ENCODE measurements at regions of chr1 and their contacts with region 1.

Region 1: DNA sequence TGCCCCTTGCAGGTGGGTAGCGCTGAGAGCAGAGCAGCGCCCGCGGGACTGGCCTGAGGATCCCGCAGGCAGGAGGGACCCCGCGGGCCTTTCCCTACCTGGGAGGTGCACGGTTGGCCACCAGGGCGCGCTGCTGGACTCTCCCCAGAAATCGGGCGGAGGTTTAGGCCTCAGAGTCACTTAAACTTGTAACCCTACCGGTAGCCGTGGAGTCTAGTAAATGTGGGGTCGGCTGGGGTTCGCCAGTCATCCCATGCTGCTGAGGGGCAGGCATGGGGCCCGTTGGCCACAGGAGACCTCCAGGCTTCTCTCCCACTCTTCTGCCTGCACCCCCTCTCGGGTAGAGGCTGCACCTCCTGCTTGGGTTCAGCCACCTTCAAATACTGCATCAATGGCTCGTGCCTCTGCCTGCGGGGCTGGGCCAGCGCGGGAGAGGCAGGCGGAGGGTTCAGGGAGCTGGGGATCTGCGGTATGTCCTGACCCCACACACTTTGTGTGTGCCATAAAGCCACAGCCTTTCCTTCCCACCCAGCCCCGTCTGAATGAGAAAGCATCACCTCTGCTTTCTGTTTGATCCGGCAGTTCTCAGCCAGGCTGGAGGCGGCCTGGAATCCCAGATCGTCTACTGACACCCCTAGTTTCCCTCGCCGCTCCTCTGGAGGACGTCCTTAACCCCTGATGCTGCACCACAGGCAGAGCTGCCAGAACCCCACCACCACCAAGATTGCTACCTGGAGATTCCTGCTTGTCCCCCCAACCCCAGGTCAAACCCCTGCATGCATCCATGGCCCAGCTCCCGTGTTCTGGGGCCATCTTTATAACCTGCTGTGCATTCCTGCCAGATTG is 12.3 kb upstream of the GSTM4 start:
- DNase-seq: peak; percentile 79 to 91 (median 88)
- ATAC-seq: peak; percentile 94
- H3K4me3 ChIP-seq: no peak overlapping the region
- H3K4me3 Mint-ChIP-seq: no peak overlapping the region
- H3K27ac ChIP-seq: no peak overlapping the region
- H3K27ac Mint-ChIP-seq: no peak overlapping the region
- H3K4me1 ChIP-seq: peaks cover 15% of the 10 kb centered on the region
- H3K4me1 Mint-ChIP-seq: peaks cover 20% of the 10 kb centered on the region
- H3K27me3 ChIP-seq: no peaks in the 10 kb centered on the region
- H3K27me3 Mint-ChIP-seq: no peaks in the 10 kb centered on the region
- CTCF ChIP-seq: peak; percentile 85

Region 2: GRCh38 chr1:109620841-109621286 is 22.7 kb before region 1 on chr1:
- CTCF ChIA-PET with region 1: interaction called, 10 read pairs
- POLR2A ChIA-PET with region 1: interaction called, 4 read pairs
- intact Hi-C with region 1: no loop called
- DNase-seq: peak; percentile 91 to 99 (median 97)
- ATAC-seq: peak; percentile 86
- H3K4me3 ChIP-seq: peak overlapping the region; percentile 91
- H3K4me3 Mint-ChIP-seq: peak overlapping the region; percentile 99
- H3K27ac ChIP-seq: peak overlapping the region; percentile 85 to 95
- H3K27ac Mint-ChIP-seq: peak overlapping the region; percentile 89
- H3K4me1 ChIP-seq: peaks cover 80% of the 10 kb centered on the region
- H3K4me1 Mint-ChIP-seq: peaks cover 82% of the 10 kb centered on the region
- H3K27me3 ChIP-seq: no peaks in the 10 kb centered on the region
- H3K27me3 Mint-ChIP-seq: no peaks in the 10 kb centered on the region
- CTCF ChIP-seq: no peak

Region 3: DNA sequence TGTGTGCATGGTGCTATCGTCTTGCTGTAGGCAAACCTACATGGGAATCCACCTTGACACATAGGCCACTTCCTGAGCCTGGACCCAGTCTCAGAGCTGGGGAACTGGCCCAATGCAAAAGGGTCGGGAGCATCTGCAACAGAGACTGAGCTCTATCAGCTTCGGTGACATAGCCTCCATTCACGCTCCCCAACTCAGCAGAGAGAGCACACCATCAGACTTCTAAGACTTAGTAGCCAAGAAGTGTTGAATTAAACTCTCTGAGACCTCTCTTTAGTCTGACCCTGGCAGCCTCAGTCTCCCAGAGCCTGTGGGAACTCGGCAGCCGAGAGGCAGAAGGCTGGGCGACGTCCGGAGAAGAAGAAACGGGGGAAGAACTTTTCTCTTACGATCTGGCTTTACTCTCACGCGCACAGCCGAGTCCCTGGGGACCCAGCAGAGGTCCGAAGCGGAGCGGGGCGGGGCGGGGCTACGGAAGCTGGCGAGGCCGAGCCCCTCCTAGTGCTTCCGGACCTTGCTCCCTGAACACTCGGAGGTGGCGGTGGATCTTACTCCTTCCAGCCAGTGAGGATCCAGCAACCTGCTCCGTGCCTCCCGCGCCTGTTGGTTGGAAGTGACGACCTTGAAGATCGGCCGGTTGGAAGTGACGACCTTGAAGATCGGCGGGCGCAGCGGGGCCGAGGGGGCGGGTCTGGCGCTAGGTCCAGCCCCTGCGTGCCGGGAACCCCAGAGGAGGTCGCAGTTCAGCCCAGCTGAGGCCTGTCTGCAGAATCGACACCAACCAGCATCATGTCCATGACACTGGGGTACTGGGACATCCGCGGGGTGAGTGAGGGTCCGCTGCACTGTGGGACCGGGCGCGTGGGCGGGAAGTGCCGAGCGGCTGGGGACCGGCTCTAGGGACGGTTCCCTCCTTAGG is 12.3 kb after region 1 on chr1 and contains the start of gene GSTM4:
- CTCF ChIA-PET with region 1: interaction called, 38 read pairs
- POLR2A ChIA-PET with region 1: interaction called, 9 read pairs
- intact Hi-C with region 1: no loop called
- DNase-seq: peak; percentile 26 to 75 (median 54)
- ATAC-seq: peak; percentile 83
- H3K4me3 ChIP-seq: peak within 1 kb of the TSS; percentile 99
- H3K4me3 Mint-ChIP-seq: peak within 1 kb of the TSS; percentile 98
- H3K27ac ChIP-seq: peak within 1 kb of the TSS in 1 of 2 donors; percentile 43
- H3K27ac Mint-ChIP-seq: peak within 1 kb of the TSS; percentile 87
- H3K4me1 ChIP-seq: peaks cover 16% of the 10 kb centered on the region
- H3K4me1 Mint-ChIP-seq: peaks cover 41% of the 10 kb centered on the region
- H3K27me3 ChIP-seq: no peaks in the 10 kb centered on the region
- H3K27me3 Mint-ChIP-seq: no peaks in the 10 kb centered on the region
- CTCF ChIP-seq: no peak
- total RNA-seq, gene GSTM4: 17.7 to 20.7 TPM

Region 4: DNA sequence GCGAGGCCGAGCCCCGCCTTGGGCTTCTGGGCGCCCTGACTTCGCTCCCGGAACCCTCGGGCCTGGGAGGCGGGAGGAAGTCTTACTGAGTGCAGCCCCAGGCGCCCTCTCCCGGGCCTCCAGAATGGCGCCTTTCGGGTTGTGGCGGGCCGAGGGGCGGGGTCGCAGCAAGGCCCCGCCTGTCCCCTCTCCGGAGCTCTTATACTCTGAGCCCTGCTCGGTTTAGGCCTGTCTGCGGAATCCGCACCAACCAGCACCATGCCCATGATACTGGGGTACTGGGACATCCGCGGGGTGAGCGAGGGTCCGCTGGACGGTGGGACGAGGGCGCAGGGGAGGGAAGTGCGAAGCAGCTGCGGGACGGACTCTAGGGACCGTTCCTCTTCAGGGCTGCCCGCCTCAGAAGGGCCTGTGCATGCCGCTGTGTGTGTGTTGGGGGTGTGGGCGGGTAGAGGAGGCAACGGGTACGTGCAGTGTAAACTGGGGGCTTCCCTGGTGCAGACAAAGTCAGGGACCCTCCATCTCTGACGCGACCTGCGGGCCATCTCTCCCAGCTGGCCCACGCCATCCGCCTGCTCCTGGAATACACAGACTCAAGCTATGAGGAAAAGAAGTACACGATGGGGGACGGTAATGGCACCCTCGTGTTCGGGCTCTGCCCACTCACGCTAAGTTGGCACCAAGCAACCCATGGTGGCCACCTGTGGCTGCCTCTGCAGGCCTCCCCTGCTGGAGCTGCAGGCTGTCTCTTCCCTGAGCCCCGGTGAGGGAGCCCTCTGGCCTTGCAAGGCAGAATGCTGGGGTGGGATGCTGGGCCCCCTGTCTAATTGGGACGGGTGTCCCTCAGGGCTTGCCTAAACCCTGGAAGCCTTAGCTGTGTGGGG is 44.2 kb after region 1 on chr1 and contains the start of gene GSTM1:
- CTCF ChIA-PET with region 1: no interaction called
- POLR2A ChIA-PET with region 1: interaction called, 28 read pairs
- intact Hi-C with region 1: loop called (anchors 5 kb)
- DNase-seq: peak in 9 of 14 experiments; percentile 59 to 87 (median 79)
- ATAC-seq: peak; percentile 99
- H3K4me3 ChIP-seq: peak within 1 kb of the TSS; percentile 67
- H3K4me3 Mint-ChIP-seq: peak within 1 kb of the TSS; percentile 95
- H3K27ac ChIP-seq: no peak within 1 kb of the TSS
- H3K27ac Mint-ChIP-seq: peak within 1 kb of the TSS; percentile 86
- H3K4me1 ChIP-seq: no peaks in the 10 kb centered on the region
- H3K4me1 Mint-ChIP-seq: peaks cover 23% of the 10 kb centered on the region
- H3K27me3 ChIP-seq: no peaks in the 10 kb centered on the region
- H3K27me3 Mint-ChIP-seq: no peaks in the 10 kb centered on the region
- CTCF ChIP-seq: peak; percentile 63
- total RNA-seq, gene GSTM1: 31.9 to 36.2 TPM

Region 5: GRCh38 chr1:109773146-109773899 is 129.7 kb after region 1 on chr1:
- CTCF ChIA-PET with region 1: interaction called, 22 read pairs
- POLR2A ChIA-PET with region 1: interaction called, 3 read pairs
- intact Hi-C with region 1: loop called (anchors 5 kb)
- DNase-seq: peak; percentile 50 to 87 (median 62)
- ATAC-seq: peak; percentile 88
- H3K4me3 ChIP-seq: no peak overlapping the region
- H3K4me3 Mint-ChIP-seq: no peak overlapping the region
- H3K27ac ChIP-seq: no peak overlapping the region
- H3K27ac Mint-ChIP-seq: no peak overlapping the region
- H3K4me1 ChIP-seq: peaks cover 21% of the 10 kb centered on the region
- H3K4me1 Mint-ChIP-seq: peaks cover 12% of the 10 kb centered on the region
- H3K27me3 ChIP-seq: no peaks in the 10 kb centered on the region
- H3K27me3 Mint-ChIP-seq: no peaks in the 10 kb centered on the region
- CTCF ChIP-seq: peak; percentile 66